Calu3 (cell line): ENCODE measurements at regions of chr2 and their contacts with region 1.

Region 1: GRCh38 chr2:35168354-35168753 is 1187.2 kb upstream of the CRIM1 start:
- DNase-seq: no peak
- H3K4me3 Mint-ChIP-seq: no peak overlapping the region
- H3K27ac Mint-ChIP-seq: no peak overlapping the region
- H3K4me1 Mint-ChIP-seq: no peaks in the 10 kb centered on the region
- H3K27me3 Mint-ChIP-seq: no peaks in the 10 kb centered on the region
- CTCF ChIP-seq: no peak

Region 2: GRCh38 chr2:35184471-35184870 is 16.1 kb after region 1 on chr2:
- CTCF ChIA-PET with region 1: no interaction called
- intact Hi-C with region 1: no loop called
- DNase-seq: no peak
- H3K4me3 Mint-ChIP-seq: no peak overlapping the region
- H3K27ac Mint-ChIP-seq: no peak overlapping the region
- H3K4me1 Mint-ChIP-seq: no peaks in the 10 kb centered on the region
- H3K27me3 Mint-ChIP-seq: no peaks in the 10 kb centered on the region
- CTCF ChIP-seq: no peak

Region 3: GRCh38 chr2:35410431-35411061 is 242.2 kb after region 1 on chr2:
- CTCF ChIA-PET with region 1: no interaction called
- intact Hi-C with region 1: loop called (anchors 1 kb)
- DNase-seq: peak; percentile 55
- H3K4me3 Mint-ChIP-seq: no peak overlapping the region
- H3K27ac Mint-ChIP-seq: no peak overlapping the region
- H3K4me1 Mint-ChIP-seq: no peaks in the 10 kb centered on the region
- H3K27me3 Mint-ChIP-seq: no peaks in the 10 kb centered on the region
- CTCF ChIP-seq: peak; percentile 60

Region 4: DNA sequence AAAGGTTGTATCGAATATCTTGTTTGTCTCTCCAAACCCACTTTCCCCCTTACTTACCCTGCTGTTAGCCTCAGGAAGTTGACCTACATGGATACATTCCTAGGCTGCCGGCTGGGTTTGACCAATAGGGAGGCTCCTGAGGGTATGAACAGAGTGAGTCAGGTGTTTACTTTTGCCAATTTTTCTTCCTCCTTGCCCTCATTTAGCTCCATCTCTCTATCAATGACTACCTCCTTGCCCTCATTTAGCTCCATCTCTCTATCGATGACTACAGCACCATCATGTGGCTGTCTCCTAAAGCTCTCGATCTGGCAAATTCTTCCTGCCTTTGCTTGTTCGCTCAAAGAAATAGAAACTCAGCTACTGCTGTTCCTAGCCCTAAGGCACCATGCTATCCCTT is 615.4 kb after region 1 on chr2:
- CTCF ChIA-PET with region 1: no interaction called
- intact Hi-C with region 1: loop called (anchors 2 kb)
- DNase-seq: peak; percentile 52
- H3K4me3 Mint-ChIP-seq: no peak overlapping the region
- H3K27ac Mint-ChIP-seq: no peak overlapping the region
- H3K4me1 Mint-ChIP-seq: no peaks in the 10 kb centered on the region
- H3K27me3 Mint-ChIP-seq: no peaks in the 10 kb centered on the region
- CTCF ChIP-seq: no peak